Activated T-helper 1 cell treated with anti-CD3 and anti-CD28 coated beads, Interleukin-12 subunit alpha, Interleukin-12 subunit beta, Interleukin-2, Interleukin-4 antibody, amounts not matched to agents 30 ng/mL and 10 ng/mL and 1 ng/mL, durations not matched to agents 14 hours and 24 hours and 36 hours (primary cell): ENCODE measurements at regions of chr6 and their contacts with region 1.

Region 1: GRCh38 chr6:26537846-26538571 is at the start of gene HMGN4:
- DNase-seq: peak; percentile 80
- H3K4me3 Mint-ChIP-seq: peak within 1 kb of the TSS; percentile 91
- H3K27ac Mint-ChIP-seq: peak within 1 kb of the TSS; percentile 96
- H3K4me1 Mint-ChIP-seq: peaks cover 60% of the 10 kb centered on the region
- H3K27me3 Mint-ChIP-seq: peaks cover 3% of the 10 kb centered on the region
- total RNA-seq, gene HMGN4: 77.6 and 86.8 TPM in 2 replicates

Region 2: GRCh38 chr6:26175428-26176181 is 362.4 kb before region 1 on chr6:
- intact Hi-C with region 1: loop called (anchors 2 kb)
- DNase-seq: peak; percentile 58
- H3K4me3 Mint-ChIP-seq: peak overlapping the region; percentile 19
- H3K27ac Mint-ChIP-seq: peak overlapping the region; percentile 79
- H3K4me1 Mint-ChIP-seq: peaks cover 51% of the 10 kb centered on the region
- H3K27me3 Mint-ChIP-seq: no peaks in the 10 kb centered on the region

Region 3: DNA sequence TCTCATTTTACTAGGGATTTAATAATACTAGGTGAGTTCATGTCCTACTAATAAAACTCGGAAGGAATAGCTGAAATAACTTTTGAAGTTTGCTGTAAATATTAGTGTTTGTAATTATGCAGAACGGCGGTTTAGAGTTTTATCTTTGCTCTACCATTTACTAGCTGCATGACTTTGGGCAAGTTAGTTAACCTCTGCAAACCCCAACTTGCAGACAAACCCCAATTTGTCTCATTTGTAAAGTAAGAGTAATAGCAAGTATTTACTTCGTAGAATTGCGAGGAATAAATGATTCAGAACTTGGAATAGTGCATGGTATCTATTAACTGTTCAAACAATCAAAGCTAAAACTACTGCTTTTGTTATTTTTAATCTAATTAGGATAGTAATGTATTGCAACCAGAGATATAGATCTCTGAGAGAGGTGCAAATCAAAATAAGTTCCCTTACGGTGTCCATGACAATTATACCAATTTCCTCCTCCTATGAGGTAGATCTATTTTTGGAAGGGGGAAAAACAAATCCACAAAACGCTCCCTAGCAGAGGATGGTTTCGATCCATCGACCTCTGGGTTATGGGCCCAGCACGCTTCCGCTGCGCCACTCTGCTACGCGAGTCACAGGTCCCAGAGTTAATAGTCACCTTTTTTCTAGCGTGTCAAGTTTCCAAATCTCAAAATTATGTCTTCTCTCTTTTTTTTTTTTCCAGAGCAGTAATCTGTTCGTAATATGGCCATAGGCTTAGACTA is 208.1 kb before region 1 on chr6:
- intact Hi-C with region 1: loop called (anchors 1 kb)
- DNase-seq: peak; percentile 48
- H3K4me3 Mint-ChIP-seq: peak overlapping the region; percentile 82
- H3K27ac Mint-ChIP-seq: peak overlapping the region; percentile 93
- H3K4me1 Mint-ChIP-seq: peaks cover 58% of the 10 kb centered on the region
- H3K27me3 Mint-ChIP-seq: peaks cover 23% of the 10 kb centered on the region

Region 4: DNA sequence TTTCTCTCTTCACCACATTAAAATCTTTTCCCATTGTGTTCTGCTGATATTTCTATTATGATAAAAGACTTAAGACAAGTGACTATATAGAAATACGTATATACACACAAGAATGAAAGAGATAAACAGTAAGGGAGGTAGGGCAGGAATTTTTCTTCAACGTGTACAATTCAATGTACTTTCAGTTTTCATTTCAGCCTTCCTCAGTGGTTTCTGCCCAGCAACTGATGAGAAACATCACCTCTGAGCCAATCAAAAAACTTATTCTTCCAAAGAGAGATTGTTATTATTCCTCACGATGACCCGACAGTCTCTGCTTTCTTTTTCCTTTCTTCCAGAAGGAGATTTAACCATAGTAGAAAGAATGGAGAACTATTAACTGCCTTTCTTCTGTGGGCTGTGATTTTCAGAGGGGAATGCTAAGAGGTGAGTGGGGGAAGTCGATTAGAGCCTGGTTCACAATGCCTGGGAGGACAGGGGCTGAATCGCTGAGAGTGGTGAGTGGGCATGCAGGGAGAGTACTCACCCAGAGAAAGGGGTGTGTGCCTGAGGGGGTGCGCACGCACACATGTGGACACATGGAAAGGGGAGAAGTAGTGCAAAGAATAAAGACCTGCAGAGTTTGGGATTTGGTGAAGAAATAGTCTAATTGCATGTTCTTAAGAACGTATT is 135.9 kb before region 1 on chr6 and contains the start of gene BTN3A1:
- intact Hi-C with region 1: loop called (anchors 1 kb)
- DNase-seq: peak; percentile 61
- H3K4me3 Mint-ChIP-seq: peak within 1 kb of the TSS; percentile 94
- H3K27ac Mint-ChIP-seq: peak within 1 kb of the TSS; percentile 97
- H3K4me1 Mint-ChIP-seq: peaks cover 56% of the 10 kb centered on the region
- H3K27me3 Mint-ChIP-seq: no peaks in the 10 kb centered on the region
- total RNA-seq, gene BTN3A1: 28.2 and 30.6 TPM in 2 replicates

Region 5: GRCh38 chr6:26520853-26521599 is 17.0 kb before region 1 on chr6:
- intact Hi-C with region 1: loop called (anchors 1 kb)
- DNase-seq: peak; percentile 78
- H3K4me3 Mint-ChIP-seq: peak overlapping the region; percentile 83
- H3K27ac Mint-ChIP-seq: peak overlapping the region; percentile 97
- H3K4me1 Mint-ChIP-seq: peaks cover 35% of the 10 kb centered on the region
- H3K27me3 Mint-ChIP-seq: peaks cover 3% of the 10 kb centered on the region

Region 6: DNA sequence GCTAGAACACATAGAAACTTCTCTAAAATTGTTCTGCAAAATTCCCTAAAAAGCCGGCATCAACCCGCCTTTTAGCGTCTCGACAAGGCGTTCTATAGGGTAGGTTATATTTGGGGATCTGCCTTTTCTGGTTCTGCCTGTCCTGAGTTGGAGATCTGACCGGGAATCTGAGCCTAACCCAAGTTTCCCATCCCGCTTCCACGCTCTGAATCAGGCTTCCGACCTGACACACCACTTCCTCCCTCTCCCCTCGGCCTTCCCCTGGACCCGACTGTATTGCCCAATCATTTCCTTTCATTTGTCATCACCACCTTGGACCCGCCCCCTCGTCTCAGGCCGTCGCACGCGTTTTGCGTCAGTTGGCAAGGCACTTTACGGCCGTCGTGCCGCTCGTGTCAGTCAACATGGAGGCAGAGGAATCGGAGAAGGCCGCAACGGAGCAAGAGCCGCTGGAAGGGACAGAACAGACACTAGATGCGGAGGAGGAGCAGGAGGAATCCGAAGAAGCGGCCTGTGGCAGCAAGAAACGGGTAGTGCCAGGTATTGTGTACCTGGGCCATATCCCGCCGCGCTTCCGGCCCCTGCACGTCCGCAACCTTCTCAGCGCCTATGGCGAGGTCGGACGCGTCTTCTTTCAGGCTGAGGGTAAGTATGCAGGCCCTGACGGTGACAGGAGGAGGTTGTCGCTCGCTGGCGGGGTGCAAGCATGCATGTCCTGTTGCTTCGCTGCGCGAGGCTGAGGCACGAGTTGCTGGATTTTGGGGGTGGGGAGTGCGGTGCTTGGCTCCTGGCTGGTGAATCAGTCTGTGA is 58.8 kb after region 1 on chr6 and contains the start of gene ABT1:
- intact Hi-C with region 1: loop called (anchors 1 kb)
- DNase-seq: peak; percentile 97
- H3K4me3 Mint-ChIP-seq: no peak within 1 kb of the TSS
- H3K27ac Mint-ChIP-seq: no peak within 1 kb of the TSS
- H3K4me1 Mint-ChIP-seq: peaks cover 39% of the 10 kb centered on the region
- H3K27me3 Mint-ChIP-seq: peaks cover 27% of the 10 kb centered on the region
- total RNA-seq, gene ABT1: 32.6 and 32.9 TPM in 2 replicates